H1 (cell line): ENCODE measurements at regions of chr10 and their contacts with region 1.

Region 1: GRCh38 chr10:100728928-100729861 is 16.2 kb upstream of the PAX2 start:
- DNase-seq: peak in 1 of 2 experiments; percentile 79
- H3K4me3 ChIP-seq: peak overlapping the region in 1 of 4 experiments; percentile 48; a peak in 2 of 8 replicates
- H3K27ac ChIP-seq: no peak overlapping the region
- H3K4me1 ChIP-seq: peaks cover 4 to 20% (median 11%) of the 10 kb centered on the region in 4 experiments
- H3K27me3 ChIP-seq: peaks cover 94 to 99% (median 97%) of the 10 kb centered on the region in 4 experiments
- CTCF ChIP-seq: peak; percentile 58 to 72 (median 69)
- EP300 ChIP-seq: no peak
- POLR2A ChIP-seq: no peak
- RAD21 ChIP-seq: peak; percentile 50 to 64

Region 2: GRCh38 chr10:100715445-100716385 is 13.5 kb before region 1 on chr10:
- CTCF ChIA-PET with region 1: interaction called, 11 read pairs
- POLR2A ChIA-PET with region 1: no interaction called
- DNase-seq: peak in 1 of 2 experiments; percentile 80
- H3K4me3 ChIP-seq: peak overlapping the region; percentile 41 to 65 (median 51)
- H3K27ac ChIP-seq: no peak overlapping the region
- H3K4me1 ChIP-seq: peaks cover 0 to 5% (median 3%) of the 10 kb centered on the region in 4 experiments; a peak in 1 of 7 replicates
- H3K27me3 ChIP-seq: peaks cover 72 to 91% (median 88%) of the 10 kb centered on the region in 4 experiments
- CTCF ChIP-seq: no peak
- EP300 ChIP-seq: no peak
- POLR2A ChIP-seq: no peak
- RAD21 ChIP-seq: no peak

Region 3: GRCh38 chr10:100800931-100801330 is 71.7 kb after region 1 on chr10:
- CTCF ChIA-PET with region 1: no interaction called
- POLR2A ChIA-PET with region 1: no interaction called
- DNase-seq: no peak
- H3K4me3 ChIP-seq: no peak overlapping the region
- H3K27ac ChIP-seq: no peak overlapping the region
- H3K4me1 ChIP-seq: peaks cover 3 to 13% (median 5%) of the 10 kb centered on the region in 4 experiments; a peak in 6 of 7 replicates
- H3K27me3 ChIP-seq: peaks cover 0 to 17% (median 6%) of the 10 kb centered on the region in 4 experiments; a peak in 5 of 7 replicates
- CTCF ChIP-seq: no peak
- EP300 ChIP-seq: no peak
- POLR2A ChIP-seq: no peak
- RAD21 ChIP-seq: no peak